Aorta (tissue), 5 donors: ENCODE measurements at regions of chr19 and their contacts with region 1.

Region 1: DNA sequence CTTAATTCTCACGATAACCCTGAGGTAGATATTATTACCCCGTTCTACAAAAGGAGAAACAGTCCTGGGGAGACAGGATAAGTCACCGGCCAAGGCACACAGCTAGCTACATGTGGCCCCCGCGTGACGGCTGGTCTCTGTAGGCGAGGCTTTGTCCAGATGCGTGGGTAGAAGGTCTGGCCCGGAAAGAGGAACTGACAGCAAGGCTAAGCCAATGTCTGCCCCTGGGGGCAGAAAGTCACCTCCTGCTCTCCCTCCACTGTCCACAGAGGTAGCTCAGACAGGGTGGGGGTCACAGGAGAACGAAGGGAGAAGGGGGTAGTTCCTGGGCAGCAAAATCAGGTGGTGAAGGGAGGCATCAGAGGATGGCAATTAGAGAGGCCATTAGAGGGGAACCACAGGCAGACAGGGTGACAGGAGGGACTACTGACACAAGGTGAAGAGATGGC is 1.8 kb downstream of the APOC4 start:
- DNase-seq: peak in 1 of 2 donors; percentile 89
- ATAC-seq: no peak
- H3K4me3 ChIP-seq: no peak overlapping the region
- H3K27ac ChIP-seq: no peak overlapping the region
- H3K4me1 ChIP-seq: no peaks in the 10 kb centered on the region
- H3K27me3 ChIP-seq: no peaks in the 10 kb centered on the region

Region 2: GRCh38 chr19:44782729-44783128 is 161.1 kb before region 1 on chr19:
- intact Hi-C with region 1: loop called in 1 of 2 experiments (anchors 10 kb)
- DNase-seq: no peak
- ATAC-seq: no peak
- H3K4me3 ChIP-seq: no peak overlapping the region
- H3K27ac ChIP-seq: no peak overlapping the region
- H3K4me1 ChIP-seq: no peaks in the 10 kb centered on the region
- H3K27me3 ChIP-seq: peaks cover 0 to 1% of the 10 kb centered on the region in 2 donors